Naive thymus-derived CD4-positive, alpha-beta T cell (primary cell): ENCODE measurements at regions of chr5 and their contacts with region 1.

Region 1: DNA sequence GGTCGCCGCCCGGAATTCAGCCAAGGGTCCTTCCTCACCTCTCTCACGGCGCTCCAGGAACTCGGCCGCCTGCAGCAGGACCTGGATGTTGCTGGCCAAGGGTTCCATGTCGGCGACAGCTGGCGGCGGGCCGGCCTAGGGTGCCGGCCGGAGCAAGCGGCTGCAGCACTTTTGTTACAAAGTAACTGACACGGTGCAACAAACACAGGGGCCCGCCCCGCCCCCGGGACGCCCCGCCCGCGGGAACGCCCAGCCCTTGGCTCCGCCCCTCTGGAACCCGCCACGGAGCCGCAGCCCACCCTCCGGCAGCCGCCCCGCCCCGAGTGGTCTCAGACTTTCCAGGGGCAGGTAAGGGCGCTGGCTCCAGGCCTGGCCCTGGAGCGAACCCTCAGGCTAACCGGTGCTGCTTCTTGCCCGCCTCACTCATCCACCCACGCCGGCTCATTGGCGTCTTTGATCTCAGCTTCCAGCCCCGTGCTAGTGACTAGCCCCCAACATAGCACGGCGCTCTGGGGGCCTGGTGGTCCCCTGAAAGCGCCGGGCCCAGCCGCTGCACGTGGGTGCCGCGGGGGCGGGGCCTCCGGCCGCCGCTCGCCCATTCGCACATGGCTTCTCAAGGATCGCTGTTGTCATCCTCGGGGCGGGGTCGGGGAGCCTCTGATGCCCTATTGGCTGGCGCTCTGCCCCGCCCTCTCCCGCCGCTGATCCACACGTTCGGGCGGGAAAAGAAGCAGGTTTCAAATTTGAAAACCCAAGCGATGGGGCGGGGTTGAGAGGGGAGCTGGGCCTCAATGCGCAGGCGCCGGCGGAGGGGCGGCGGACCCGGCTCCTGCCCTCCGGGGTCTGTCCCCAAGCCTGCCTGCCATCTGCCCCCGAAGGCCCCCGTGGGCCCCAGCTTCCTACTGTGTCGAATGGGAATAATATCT is at the start of gene MXD3:
- DNase-seq: peak; percentile 87 to 97 (median 92)
- ATAC-seq: peak; percentile 95
- H3K4me3 ChIP-seq: peak within 1 kb of the TSS; percentile 77
- H3K4me3 Mint-ChIP-seq: peak within 1 kb of the TSS; percentile 78 to 93 (median 84)
- H3K27ac ChIP-seq: peak within 1 kb of the TSS; percentile 51
- H3K27ac Mint-ChIP-seq: peak within 1 kb of the TSS in 6 of 9 donors; percentile 42 to 92 (median 59)
- H3K4me1 ChIP-seq: peaks cover 21 to 22% of the 10 kb centered on the region in 2 donors
- H3K4me1 Mint-ChIP-seq: peaks cover 11 to 49% (median 32%) of the 10 kb centered on the region in 7 donors
- H3K27me3 ChIP-seq: no peaks in the 10 kb centered on the region
- H3K27me3 Mint-ChIP-seq: peaks cover 0 to 5% (median 0%) of the 10 kb centered on the region in 5 donors
- total RNA-seq, gene MXD3: 8.8 to 39.8 (median 18.3) TPM

Region 2: GRCh38 chr5:177370488-177371119 is 58.6 kb after region 1 on chr5:
- CTCF ChIA-PET with region 1: interaction called, 7 read pairs
- POLR2A ChIA-PET with region 1: interaction called, 6 read pairs
- intact Hi-C with region 1: loop called in 1 of 2 experiments (anchors 1 kb)
- DNase-seq: peak in 7 of 9 donors; percentile 36 to 74 (median 65)
- ATAC-seq: peak; percentile 90
- H3K4me3 ChIP-seq: no peak overlapping the region
- H3K4me3 Mint-ChIP-seq: peak overlapping the region in 7 of 10 donors; percentile 20 to 79 (median 64)
- H3K27ac ChIP-seq: peak overlapping the region; percentile 76
- H3K27ac Mint-ChIP-seq: peak overlapping the region in 7 of 9 donors; percentile 33 to 94 (median 86)
- H3K4me1 ChIP-seq: peaks cover 36 to 73% of the 10 kb centered on the region in 2 donors
- H3K4me1 Mint-ChIP-seq: peaks cover 51 to 80% (median 70%) of the 10 kb centered on the region in 7 donors
- H3K27me3 ChIP-seq: no peaks in the 10 kb centered on the region
- H3K27me3 Mint-ChIP-seq: no peaks in the 10 kb centered on the region

Region 3: GRCh38 chr5:177529247-177530203 is 217.5 kb after region 1 on chr5:
- CTCF ChIA-PET with region 1: no interaction called
- POLR2A ChIA-PET with region 1: no interaction called
- intact Hi-C with region 1: no loop called
- DNase-seq: no peak
- ATAC-seq: no peak
- H3K4me3 ChIP-seq: no peak overlapping the region
- H3K4me3 Mint-ChIP-seq: no peak overlapping the region
- H3K27ac ChIP-seq: no peak overlapping the region
- H3K27ac Mint-ChIP-seq: peak overlapping the region in 6 of 9 donors; percentile 12 to 47 (median 43)
- H3K4me1 ChIP-seq: no peaks in the 10 kb centered on the region
- H3K4me1 Mint-ChIP-seq: peaks cover 0 to 4% (median 2%) of the 10 kb centered on the region in 7 donors
- H3K27me3 ChIP-seq: no peaks in the 10 kb centered on the region
- H3K27me3 Mint-ChIP-seq: no peaks in the 10 kb centered on the region